Ascending aorta (tissue), 2 donors: ENCODE measurements at regions of chr4 and their contacts with region 1.

Region 1: DNA sequence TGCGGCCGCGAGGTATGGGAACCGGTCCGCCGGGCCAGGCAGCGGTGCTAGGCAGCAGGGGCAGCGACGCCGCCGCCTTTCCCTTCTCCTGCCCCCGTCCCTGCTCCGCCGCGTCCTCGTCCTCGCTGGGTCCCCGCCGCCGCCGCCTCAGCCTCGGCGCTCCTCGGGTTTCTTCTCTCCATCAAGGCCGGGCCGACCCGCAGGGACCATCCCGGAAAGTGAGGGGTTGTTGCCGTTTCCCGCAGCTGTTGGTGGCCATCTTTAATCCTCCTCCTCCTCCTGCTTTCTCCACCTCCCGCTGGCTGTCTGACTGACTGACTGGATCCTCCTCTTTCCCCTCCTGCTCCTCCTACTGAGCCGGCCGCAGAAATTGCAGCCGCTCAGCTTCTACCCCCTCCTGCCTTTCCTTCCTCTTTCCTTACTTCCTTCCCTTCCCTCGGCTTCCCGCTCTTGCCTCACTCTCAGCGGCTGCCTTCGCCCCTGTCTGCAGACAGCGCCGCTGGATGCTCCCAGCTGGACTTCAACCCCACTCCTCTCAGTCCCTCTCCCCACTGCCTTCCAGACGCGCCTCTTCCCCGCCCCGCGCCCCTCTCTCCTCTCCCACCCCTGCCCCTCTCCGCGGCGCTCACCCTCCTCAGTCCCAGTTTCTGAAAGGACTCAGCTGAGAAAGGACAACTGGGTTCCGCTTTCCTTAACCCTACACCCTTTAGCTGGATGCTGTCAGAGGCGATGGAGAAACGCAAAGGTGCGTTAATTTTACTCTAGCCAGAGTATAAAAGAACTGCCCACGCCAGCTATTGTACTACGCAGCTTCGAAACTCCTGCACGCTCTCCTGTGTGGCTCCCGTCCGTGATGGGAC is at the start of gene WDFY3:
- DNase-seq: peak; percentile 53 to 91
- H3K4me3 ChIP-seq: peak within 1 kb of the TSS; percentile 85 to 87
- H3K27ac ChIP-seq: peak within 1 kb of the TSS; percentile 91 to 95
- H3K4me1 ChIP-seq: peaks cover 0 to 29% of the 10 kb centered on the region in 2 donors
- H3K27me3 ChIP-seq: no peaks in the 10 kb centered on the region
- CTCF ChIP-seq: peak in 1 of 3 experiments; percentile 7
- total RNA-seq, gene WDFY3: 30.2 TPM

Region 2: DNA sequence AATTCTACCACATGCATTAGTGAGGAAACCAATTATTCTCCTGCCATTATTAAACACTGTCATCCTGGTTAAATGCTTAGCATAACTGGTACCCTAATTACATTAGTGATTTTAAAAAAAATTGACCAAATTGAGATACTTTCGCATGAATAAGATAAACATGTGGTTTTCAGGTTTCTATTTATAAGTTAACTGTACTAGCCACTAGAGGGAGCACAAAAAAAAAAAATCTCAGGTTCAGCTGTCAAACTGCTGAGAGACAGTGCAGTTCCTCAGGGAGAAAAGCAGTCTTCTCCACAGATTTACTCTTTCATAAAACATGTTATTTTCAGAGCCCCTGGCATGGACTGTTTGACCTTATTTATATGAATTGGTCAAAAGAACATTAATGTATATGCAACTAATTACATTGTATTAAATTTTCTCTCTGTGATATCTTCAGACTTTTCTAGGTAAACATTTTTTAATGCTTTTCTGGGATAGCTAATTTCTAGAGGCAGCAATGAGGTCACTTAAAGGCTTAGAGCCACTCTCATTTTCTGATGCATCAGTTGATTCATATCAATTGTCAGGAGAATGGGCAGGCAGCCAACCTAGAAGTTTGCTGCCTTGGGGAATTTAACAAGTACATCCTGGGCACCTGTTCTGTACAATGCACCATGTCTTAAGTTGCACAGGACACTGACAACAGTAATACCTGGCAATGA is 216.2 kb before region 1 on chr4:
- intact Hi-C with region 1: loop called (anchors 1 kb)
- DNase-seq: no peak
- H3K4me3 ChIP-seq: no peak overlapping the region
- H3K27ac ChIP-seq: no peak overlapping the region
- H3K4me1 ChIP-seq: peaks cover 0 to 2% of the 10 kb centered on the region in 2 donors
- H3K27me3 ChIP-seq: no peaks in the 10 kb centered on the region
- CTCF ChIP-seq: peak; percentile 47 to 65 (median 49)

Region 3: GRCh38 chr4:84792366-84793301 is 174.0 kb before region 1 on chr4:
- intact Hi-C with region 1: no loop called
- DNase-seq: no peak
- H3K4me3 ChIP-seq: no peak overlapping the region
- H3K27ac ChIP-seq: no peak overlapping the region
- H3K4me1 ChIP-seq: no peaks in the 10 kb centered on the region
- H3K27me3 ChIP-seq: no peaks in the 10 kb centered on the region
- CTCF ChIP-seq: no peak

Region 4: DNA sequence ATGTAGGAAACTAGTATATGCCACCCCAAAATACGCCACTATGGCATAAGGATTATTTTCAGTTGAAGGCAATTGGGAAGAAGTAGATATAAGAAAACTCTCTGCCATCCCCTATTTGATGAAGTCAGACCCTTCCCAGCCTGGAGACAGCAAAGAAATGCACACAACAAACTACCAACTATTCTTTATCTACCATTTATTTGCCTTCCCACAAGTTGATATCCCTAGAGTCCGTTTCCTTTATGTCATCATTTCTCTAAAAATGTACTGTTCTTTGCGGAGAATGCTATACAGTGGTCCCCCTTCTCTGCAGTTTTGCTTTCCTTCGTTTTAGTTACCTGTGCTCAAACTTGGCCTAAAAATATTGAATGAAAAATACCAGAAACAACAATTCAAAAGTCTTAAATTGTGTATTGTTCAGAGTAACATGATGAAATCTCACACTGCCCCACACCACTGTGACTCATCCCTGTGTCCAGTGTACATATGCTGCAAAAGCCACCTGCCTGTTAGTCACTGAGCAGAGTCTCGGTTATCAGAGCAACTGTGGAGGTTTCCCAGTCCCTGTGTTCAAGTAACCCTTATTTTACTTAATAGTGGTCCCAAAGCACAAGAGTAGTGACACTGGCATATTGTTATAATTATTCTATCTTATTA is 152.4 kb before region 1 on chr4:
- intact Hi-C with region 1: loop called (anchors 5 kb)
- DNase-seq: peak; percentile 14 to 63
- H3K4me3 ChIP-seq: no peak overlapping the region
- H3K27ac ChIP-seq: no peak overlapping the region
- H3K4me1 ChIP-seq: no peaks in the 10 kb centered on the region
- H3K27me3 ChIP-seq: no peaks in the 10 kb centered on the region
- CTCF ChIP-seq: no peak

Region 5: GRCh38 chr4:84937381-84937977 is 29.1 kb before region 1 on chr4:
- intact Hi-C with region 1: loop called (anchors 2 kb)
- DNase-seq: no peak
- H3K4me3 ChIP-seq: no peak overlapping the region
- H3K27ac ChIP-seq: peak overlapping the region; percentile 63 to 77
- H3K4me1 ChIP-seq: peaks cover 3 to 41% of the 10 kb centered on the region in 2 donors
- H3K27me3 ChIP-seq: no peaks in the 10 kb centered on the region
- CTCF ChIP-seq: no peak